Activated T-helper 2 cell treated with anti-CD3 and anti-CD28 coated beads, Interferon-gamma antibody, Interleukin-2, Interleukin-4, amounts not matched to agents 10 μg/mL and 5 μg/mL and 100 μg/mL, durations not matched to agents 14 hours and 24 hours and 36 hours (primary cell): ENCODE measurements at regions of chrX and their contacts with region 1.

Region 1: GRCh38 chrX:19870710-19871490 is 16.5 kb downstream of the SH3KBP1 start:
- DNase-seq: no peak
- H3K4me3 Mint-ChIP-seq: peak overlapping the region; percentile 8
- H3K27ac Mint-ChIP-seq: peak overlapping the region; percentile 81
- H3K4me1 Mint-ChIP-seq: peaks cover 68% of the 10 kb centered on the region
- H3K27me3 Mint-ChIP-seq: no peaks in the 10 kb centered on the region

Region 2: DNA sequence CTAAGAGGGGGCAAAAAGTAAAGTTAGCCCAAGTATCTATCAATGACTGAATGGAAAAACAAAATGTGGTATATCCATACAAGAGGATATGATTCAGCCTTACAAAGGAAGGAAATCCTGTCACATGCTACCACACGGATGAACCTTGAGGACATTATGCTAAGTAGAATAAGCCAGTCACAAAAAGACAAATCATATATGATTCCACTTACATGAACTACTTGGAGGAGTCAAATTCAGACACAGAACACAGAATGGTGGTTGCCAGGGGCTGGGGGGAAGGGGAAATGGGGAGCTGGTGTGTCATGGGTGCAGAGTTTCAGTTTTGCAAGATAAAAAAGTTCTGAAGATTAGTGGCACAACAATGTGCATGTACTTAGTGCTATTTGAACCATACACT is 85.3 kb before region 1 on chrX:
- intact Hi-C with region 1: loop called (anchors 5 kb)
- DNase-seq: no peak
- H3K4me3 Mint-ChIP-seq: no peak overlapping the region
- H3K27ac Mint-ChIP-seq: peak overlapping the region; percentile 47
- H3K4me1 Mint-ChIP-seq: peaks cover 25% of the 10 kb centered on the region
- H3K27me3 Mint-ChIP-seq: no peaks in the 10 kb centered on the region

Region 3: DNA sequence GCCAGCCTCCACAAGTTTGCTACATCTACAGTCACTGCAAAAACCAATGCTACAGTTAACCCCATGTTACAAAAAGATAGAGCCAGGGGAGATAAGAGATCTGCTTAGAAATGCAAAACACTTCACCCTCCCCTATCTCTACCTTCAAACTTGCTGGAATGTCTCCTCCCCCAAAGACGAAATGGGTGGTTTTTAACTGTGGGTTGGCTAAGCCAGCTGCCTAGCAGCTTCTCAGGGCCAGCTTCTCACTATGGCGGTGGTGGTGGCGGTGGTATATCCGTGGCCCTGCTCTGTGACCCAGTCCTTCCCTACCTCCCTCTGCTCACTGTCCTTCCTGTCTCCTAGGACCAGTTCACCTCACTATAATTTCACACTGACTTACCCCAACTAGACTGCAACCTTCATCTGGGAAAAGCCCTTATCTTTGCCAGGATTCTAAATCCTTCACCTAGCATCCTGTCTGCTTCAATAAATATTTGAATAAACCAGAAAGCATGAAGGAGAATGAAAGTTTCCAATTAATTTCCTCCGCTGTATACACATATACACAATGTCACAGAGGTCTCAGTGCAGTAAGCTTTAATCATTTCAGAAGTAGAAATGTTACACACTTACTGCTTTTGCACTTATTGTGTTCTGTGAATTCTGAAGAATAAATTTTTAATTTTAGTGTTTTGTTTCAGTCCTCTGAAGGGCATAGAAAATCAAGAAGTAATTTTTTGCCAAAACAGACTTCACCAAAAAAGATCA is 29.8 kb before region 1 on chrX:
- intact Hi-C with region 1: loop called (anchors 1 kb)
- DNase-seq: peak; percentile 59
- H3K4me3 Mint-ChIP-seq: peak overlapping the region; percentile 68
- H3K27ac Mint-ChIP-seq: peak overlapping the region; percentile 94
- H3K4me1 Mint-ChIP-seq: peaks cover 48% of the 10 kb centered on the region
- H3K27me3 Mint-ChIP-seq: no peaks in the 10 kb centered on the region

Region 4: GRCh38 chrX:19846995-19847790 is 23.7 kb before region 1 on chrX:
- intact Hi-C with region 1: loop called (anchors 1 kb)
- DNase-seq: no peak
- H3K4me3 Mint-ChIP-seq: peak overlapping the region; percentile 57
- H3K27ac Mint-ChIP-seq: peak overlapping the region; percentile 90
- H3K4me1 Mint-ChIP-seq: peaks cover 46% of the 10 kb centered on the region
- H3K27me3 Mint-ChIP-seq: no peaks in the 10 kb centered on the region

Region 5: DNA sequence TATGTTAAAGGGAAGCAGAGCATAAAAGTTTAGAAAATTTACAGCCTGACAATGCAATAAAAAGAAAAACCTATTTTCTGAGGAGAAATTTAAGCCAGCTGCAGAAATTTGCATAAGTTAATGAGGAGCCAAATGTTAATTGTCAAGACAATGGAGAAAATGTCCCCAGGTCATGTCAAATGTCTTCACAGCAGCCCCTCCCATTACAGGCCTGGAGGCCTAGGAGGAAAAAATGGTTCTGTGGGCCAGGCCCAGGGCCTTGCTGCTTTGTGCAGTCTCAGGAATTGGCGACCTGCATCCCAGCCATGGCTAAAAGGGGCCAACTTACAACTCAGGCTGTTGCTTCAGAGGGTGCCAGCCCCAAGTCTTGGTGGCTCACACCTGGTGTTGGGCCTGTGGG is 671.2 kb after region 1 on chrX:
- intact Hi-C with region 1: no loop called
- DNase-seq: no peak
- H3K4me3 Mint-ChIP-seq: no peak overlapping the region
- H3K27ac Mint-ChIP-seq: no peak overlapping the region
- H3K4me1 Mint-ChIP-seq: no peaks in the 10 kb centered on the region
- H3K27me3 Mint-ChIP-seq: peaks cover 2% of the 10 kb centered on the region